ENCODE measurements at regions of chr3 and their contacts with region 1.

Region 1: GRCh38 chr3:136305878-136306277 is 55.7 kb downstream of the PCCB start:
- DNase-seq: peak; percentile 62
- H3K4me3 ChIP-seq: no peak overlapping the region
- H3K27ac ChIP-seq: no peak overlapping the region
- H3K4me1 ChIP-seq: no peaks in the 10 kb centered on the region
- CTCF ChIP-seq: peak; percentile 85

Region 2: DNA sequence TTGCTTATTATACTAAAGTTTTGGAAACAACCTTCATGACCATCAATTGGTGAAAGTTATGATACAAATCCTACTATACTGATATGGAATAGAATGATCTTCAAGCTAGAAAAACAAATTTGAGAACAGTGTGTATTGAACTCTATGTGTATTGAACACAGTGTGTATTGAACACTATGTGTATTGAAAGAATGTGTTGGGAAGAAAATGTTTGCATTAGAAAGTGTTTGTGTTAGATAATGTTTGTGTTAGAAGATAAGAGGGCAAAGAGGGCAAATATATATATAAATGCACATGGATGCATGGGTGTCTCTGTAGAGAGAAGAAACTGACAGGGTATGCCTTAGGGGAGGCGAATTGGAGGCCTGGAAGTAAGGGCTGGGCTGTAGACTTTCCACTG is 13.4 kb before region 1 on chr3:
- CTCF ChIA-PET with region 1: no interaction called
- POLR2A ChIA-PET with region 1: interaction called, 11 read pairs
- intact Hi-C with region 1: no loop called
- DNase-seq: no peak
- H3K4me3 ChIP-seq: no peak overlapping the region
- H3K27ac ChIP-seq: no peak overlapping the region
- H3K4me1 ChIP-seq: no peaks in the 10 kb centered on the region
- CTCF ChIP-seq: no peak